ENCODE measurements at regions of chr7 and their contacts with region 1.

Region 1: DNA sequence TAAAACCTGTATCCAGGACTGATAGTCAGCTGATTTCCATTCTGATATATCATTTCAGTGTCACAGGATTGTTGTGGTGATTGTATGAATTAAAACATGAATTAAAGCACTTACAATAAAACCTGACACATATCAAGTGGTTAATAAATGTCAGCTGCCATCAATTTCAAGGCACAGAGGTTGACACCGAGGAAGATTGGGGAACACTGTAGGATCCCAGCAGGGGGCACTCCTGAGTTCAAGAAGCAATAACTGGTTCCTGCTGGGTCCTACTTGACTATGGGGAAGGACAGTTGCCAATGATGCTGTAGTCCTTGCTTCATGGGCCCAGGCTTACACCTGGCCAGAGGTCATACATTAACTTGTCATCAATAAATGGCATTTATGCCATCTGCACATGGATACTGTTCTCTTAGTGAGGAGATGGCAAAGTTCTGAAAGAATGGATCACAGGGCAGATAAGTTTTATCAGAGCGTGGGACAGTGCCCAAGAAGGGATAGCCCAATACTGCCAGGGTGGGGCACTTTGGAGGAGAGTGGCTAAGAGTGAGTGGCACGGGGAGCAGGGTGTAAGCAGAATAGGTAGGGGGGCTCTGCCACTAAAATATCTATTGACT is 24.1 kb downstream of the FZD1 start:
- DNase-seq: no peak
- ATAC-seq: no peak
- H3K4me3 ChIP-seq: no peak overlapping the region
- H3K4me3 Mint-ChIP-seq: no peak overlapping the region
- H3K27ac ChIP-seq: no peak overlapping the region
- H3K27ac Mint-ChIP-seq: no peak overlapping the region
- H3K4me1 ChIP-seq: no peaks in the 10 kb centered on the region
- H3K4me1 Mint-ChIP-seq: no peaks in the 10 kb centered on the region
- H3K27me3 ChIP-seq: no peaks in the 10 kb centered on the region
- H3K27me3 Mint-ChIP-seq: peaks cover 3% of the 10 kb centered on the region
- CTCF ChIP-seq: no peak

Region 2: DNA sequence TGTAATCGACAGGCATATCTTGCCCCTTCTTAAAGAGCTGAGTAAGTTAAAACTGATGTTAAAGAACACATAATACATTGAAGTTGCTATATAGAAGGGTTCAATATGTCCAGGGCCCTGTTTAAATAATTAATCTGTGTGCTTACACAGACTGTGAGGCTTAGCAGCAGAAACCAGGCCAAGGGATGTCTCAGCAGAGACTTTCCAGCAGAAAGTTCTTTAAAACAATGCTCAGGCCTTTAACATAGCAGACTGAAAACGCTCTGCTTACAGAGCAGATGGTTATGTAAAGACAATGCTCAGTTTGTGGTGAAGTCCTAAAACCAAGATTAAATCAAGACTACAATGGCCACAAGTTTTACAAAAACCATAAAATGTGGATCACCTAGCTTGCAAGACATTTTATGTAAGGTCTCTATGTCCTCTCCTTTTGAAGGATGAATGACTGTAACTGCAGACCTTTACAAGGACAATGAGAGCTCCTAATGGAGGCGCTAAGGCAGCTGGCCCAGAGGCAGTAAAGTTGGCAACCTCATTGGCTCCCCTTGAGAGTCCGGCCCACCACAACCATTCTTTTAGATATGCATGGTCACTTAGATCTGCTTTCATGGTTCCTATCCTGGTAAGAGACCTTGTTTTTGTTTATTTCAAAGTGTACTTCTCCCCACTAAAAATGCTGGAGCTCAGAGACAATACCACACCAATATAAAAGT is 32.2 kb after region 1 on chr7:
- CTCF ChIA-PET with region 1: no interaction called
- POLR2A ChIA-PET with region 1: no interaction called
- intact Hi-C with region 1: loop called in 1 of 2 experiments (anchors 1 kb)
- DNase-seq: no peak
- ATAC-seq: no peak
- H3K4me3 ChIP-seq: no peak overlapping the region
- H3K4me3 Mint-ChIP-seq: no peak overlapping the region
- H3K27ac ChIP-seq: no peak overlapping the region
- H3K27ac Mint-ChIP-seq: no peak overlapping the region
- H3K4me1 ChIP-seq: no peaks in the 10 kb centered on the region
- H3K4me1 Mint-ChIP-seq: no peaks in the 10 kb centered on the region
- H3K27me3 ChIP-seq: no peaks in the 10 kb centered on the region
- H3K27me3 Mint-ChIP-seq: peaks cover 5% of the 10 kb centered on the region
- CTCF ChIP-seq: no peak

Region 3: DNA sequence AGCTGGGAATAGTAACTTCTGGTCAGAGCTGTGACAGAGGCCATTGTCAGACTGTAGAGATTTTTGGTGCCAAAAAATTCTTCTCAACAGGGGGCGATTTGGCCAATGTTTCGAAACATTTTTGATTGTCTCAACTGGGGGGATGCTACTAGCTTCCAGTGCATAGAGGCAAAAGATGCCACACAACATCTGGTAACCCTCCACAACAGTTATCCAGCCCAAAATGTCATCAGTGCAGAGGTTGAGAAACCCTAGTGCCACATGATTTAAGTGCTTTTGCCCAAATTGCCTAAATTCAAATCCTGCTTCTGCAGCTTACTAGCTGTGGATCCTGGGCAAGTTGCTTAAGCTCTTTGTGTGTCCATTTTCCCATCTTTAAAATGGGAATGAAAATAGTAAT is 47.8 kb after region 1 on chr7:
- CTCF ChIA-PET with region 1: no interaction called
- POLR2A ChIA-PET with region 1: no interaction called
- intact Hi-C with region 1: loop called in 1 of 2 experiments (anchors 5 kb)
- DNase-seq: no peak
- ATAC-seq: no peak
- H3K4me3 ChIP-seq: no peak overlapping the region
- H3K4me3 Mint-ChIP-seq: no peak overlapping the region
- H3K27ac ChIP-seq: no peak overlapping the region
- H3K27ac Mint-ChIP-seq: no peak overlapping the region
- H3K4me1 ChIP-seq: no peaks in the 10 kb centered on the region
- H3K4me1 Mint-ChIP-seq: no peaks in the 10 kb centered on the region
- H3K27me3 ChIP-seq: no peaks in the 10 kb centered on the region
- H3K27me3 Mint-ChIP-seq: no peaks in the 10 kb centered on the region
- CTCF ChIP-seq: no peak

Region 4: DNA sequence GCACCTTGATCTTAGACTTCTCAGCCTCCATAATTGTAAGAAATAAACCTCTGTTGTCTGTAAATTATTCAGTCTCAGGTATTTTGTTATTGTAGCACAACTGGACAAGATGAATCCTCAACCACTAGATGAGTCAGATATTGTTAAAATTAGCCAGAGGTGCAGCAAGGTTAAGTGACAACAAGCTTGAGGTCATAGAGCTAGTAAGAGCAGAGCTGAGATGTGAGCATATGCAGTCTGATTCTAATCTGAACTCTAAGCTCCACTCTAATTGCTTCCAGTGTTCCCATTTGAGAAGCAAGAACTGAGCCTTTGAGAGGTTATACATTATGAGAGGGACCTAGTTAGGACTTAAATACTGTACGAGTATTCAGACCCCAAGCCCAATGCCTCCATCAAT is 69.1 kb after region 1 on chr7:
- CTCF ChIA-PET with region 1: no interaction called
- POLR2A ChIA-PET with region 1: no interaction called
- intact Hi-C with region 1: no loop called
- DNase-seq: no peak
- ATAC-seq: no peak
- H3K4me3 ChIP-seq: no peak overlapping the region
- H3K4me3 Mint-ChIP-seq: no peak overlapping the region
- H3K27ac ChIP-seq: no peak overlapping the region
- H3K27ac Mint-ChIP-seq: no peak overlapping the region
- H3K4me1 ChIP-seq: no peaks in the 10 kb centered on the region
- H3K4me1 Mint-ChIP-seq: no peaks in the 10 kb centered on the region
- H3K27me3 ChIP-seq: no peaks in the 10 kb centered on the region
- H3K27me3 Mint-ChIP-seq: no peaks in the 10 kb centered on the region
- CTCF ChIP-seq: no peak

Measured in CD8-positive, alpha-beta T cell (primary cell).